Motor neuron (in vitro differentiated cells): ENCODE measurements at regions of chr5 and their contacts with region 1.

Region 1: GRCh38 chr5:96067894-96068614 is 106.4 kb upstream of the ELL2 start:
- ATAC-seq: peak in 6 of 8 experiments; percentile 55 to 93 (median 78)
- H3K4me3 ChIP-seq: no peak overlapping the region
- H3K27ac ChIP-seq: no peak overlapping the region
- H3K4me1 ChIP-seq: no peaks in the 10 kb centered on the region

Region 2: GRCh38 chr5:96151891-96152290 is 83.8 kb after region 1 on chr5:
- in situ Hi-C with region 1: loop called in 1 of 9 experiments (anchors 25 kb)
- ATAC-seq: peak in 1 of 8 experiments; percentile 25
- H3K4me3 ChIP-seq: no peak overlapping the region
- H3K27ac ChIP-seq: no peak overlapping the region
- H3K4me1 ChIP-seq: no peaks in the 10 kb centered on the region